ENCODE measurements at regions of chr11 and their contacts with region 1.

Region 1: GRCh38 chr11:111422494-111423249 is 43.6 kb upstream of the POU2AF1 start:
- DNase-seq: peak; percentile 70 to 76 (median 72)
- H3K4me3 ChIP-seq: no peak overlapping the region
- H3K27ac ChIP-seq: no peak overlapping the region
- H3K4me1 ChIP-seq: peaks cover 0 to 8% (median 6%) of the 10 kb centered on the region in 4 experiments
- H3K27me3 ChIP-seq: peaks cover 0 to 3% (median 0%) of the 10 kb centered on the region in 5 experiments

Region 2: GRCh38 chr11:111408789-111409727 is 13.6 kb before region 1 on chr11:
- CTCF ChIA-PET with region 1: interaction called, 18 read pairs
- POLR2A ChIA-PET with region 1: no interaction called
- DNase-seq: peak in 2 of 3 donors; percentile 54 to 71
- H3K4me3 ChIP-seq: no peak overlapping the region
- H3K27ac ChIP-seq: no peak overlapping the region
- H3K4me1 ChIP-seq: peaks cover under 1 to 18% (median 3%) of the 10 kb centered on the region in 4 experiments
- H3K27me3 ChIP-seq: no peaks in the 10 kb centered on the region

Region 3: DNA sequence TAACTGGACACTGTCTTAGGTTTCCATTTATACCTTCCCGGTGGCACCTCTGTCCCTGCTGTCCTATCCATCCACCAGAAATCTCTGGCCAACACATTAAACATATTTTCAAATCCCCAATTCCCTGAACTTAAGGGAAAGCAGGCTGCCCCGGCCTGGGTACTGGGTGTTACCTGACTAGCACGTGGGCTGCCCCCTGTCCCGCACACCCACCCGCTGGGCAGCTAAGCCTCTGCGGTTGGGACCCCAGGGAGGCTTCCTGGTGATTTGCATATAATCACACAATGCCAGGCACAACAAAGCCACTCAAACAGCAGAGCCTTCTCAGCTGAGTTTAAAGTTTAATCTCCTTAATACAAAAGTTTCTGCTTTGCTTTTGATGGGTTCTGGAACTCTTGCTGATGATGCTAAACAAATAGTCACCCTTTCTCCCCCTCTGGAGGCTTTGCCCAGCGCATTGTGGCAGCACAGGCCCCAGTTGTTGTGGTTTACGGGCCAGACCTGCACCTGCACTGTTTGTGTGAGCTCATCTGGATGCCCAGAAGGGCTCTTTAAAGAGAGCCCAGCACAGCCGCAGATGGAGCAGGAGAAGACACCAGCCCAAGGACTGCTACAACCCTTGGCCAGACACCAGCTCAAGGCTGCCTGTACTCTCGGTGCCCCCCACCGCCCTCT is 16.3 kb after region 1 on chr11:
- CTCF ChIA-PET with region 1: interaction called, 10 read pairs
- POLR2A ChIA-PET with region 1: no interaction called
- DNase-seq: no peak
- H3K4me3 ChIP-seq: no peak overlapping the region
- H3K27ac ChIP-seq: no peak overlapping the region
- H3K4me1 ChIP-seq: peaks cover 0 to 13% (median 3%) of the 10 kb centered on the region in 4 experiments
- H3K27me3 ChIP-seq: peaks cover 0 to 2% (median 0%) of the 10 kb centered on the region in 5 experiments

Region 4: DNA sequence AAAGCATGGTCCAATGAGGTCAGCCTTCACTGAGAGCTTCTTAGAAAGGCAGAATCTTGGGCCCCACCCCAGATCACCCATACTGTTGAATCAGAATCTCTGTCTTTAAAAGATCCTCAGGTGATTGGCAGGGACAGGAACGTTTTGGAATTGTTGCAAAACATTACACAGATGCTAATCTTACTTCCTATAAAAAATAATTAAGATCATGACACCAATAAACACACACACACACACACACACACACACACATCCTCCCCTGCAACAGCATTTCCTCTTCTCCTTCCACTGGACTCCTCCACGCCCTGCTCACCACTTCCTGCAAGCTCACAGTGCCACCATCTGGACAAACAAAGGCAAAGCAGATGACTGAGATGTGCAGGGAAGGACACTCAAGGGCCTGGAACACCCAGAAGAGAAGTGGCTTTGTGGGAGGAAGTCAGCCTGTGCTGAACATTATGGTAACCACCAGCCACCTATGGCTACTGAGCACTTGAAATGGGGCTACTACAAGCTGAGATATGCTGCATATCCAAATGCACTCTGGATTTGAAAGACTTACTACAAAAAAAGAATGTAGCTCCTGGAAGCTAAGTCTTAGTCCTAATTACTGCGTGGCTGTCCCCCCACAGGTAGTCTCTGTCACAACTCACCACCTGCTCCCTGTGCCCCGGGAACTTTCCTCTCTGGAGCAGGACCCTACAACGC is 23.9 kb after region 1 on chr11:
- CTCF ChIA-PET with region 1: interaction called, 17 read pairs
- POLR2A ChIA-PET with region 1: no interaction called
- DNase-seq: peak; percentile 98 to 99 (median 99)
- H3K4me3 ChIP-seq: peak overlapping the region in 1 of 7 experiments; percentile 27
- H3K27ac ChIP-seq: no peak overlapping the region
- H3K4me1 ChIP-seq: peaks cover 4 to 18% (median 8%) of the 10 kb centered on the region in 4 experiments
- H3K27me3 ChIP-seq: no peaks in the 10 kb centered on the region

Measured in common myeloid progenitor, CD34-positive (primary cell).